Activated CD4-positive, alpha-beta memory T cell treated with anti-CD3 and anti-CD28 coated beads for 36 hours (primary cell): ENCODE measurements at regions of chrX and their contacts with region 1.

Region 1: DNA sequence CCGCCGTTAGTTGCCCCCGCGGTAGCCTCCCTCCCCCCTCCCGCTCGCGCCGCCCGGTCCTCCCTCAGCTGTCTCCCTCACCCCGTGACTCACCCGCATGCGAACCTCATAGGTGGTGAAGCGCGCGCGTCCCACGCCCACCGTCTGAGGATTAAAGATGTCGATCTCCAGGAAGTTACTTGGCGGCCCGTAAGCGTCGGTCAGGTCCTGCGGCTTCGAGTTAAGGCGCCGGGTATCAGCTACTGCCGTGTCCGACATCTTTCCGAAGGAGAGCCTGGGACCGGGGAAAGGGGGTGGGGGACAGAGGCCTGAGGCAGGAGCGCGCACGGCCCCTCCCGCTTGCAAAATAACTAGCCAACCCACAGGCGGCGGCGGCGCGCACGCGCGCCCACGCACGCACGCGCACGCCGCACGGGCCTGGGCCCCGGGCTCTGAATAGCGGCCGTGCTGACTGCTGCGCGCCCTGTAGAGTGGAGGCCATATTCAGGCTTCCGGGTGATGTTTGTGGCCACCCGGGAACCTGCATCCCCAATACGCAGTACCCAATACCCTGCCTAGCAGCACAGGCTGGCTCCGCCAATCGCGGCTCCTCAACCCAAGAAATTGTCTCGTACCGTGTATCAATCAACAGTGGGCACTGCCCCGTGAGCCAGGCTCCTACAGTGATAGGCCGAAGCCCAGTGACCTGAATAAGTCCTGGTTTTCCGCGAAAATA is at the start of gene SNX12:
- DNase-seq: peak; percentile 94
- H3K4me3 Mint-ChIP-seq: peak within 1 kb of the TSS; percentile 95
- H3K27ac Mint-ChIP-seq: peak within 1 kb of the TSS; percentile 97
- H3K4me1 Mint-ChIP-seq: peaks cover 18% of the 10 kb centered on the region
- H3K27me3 Mint-ChIP-seq: no peaks in the 10 kb centered on the region
- total RNA-seq, gene SNX12: 42.1 to 42.5 TPM

Region 2: GRCh38 chrX:71053217-71053621 is 15.0 kb before region 1 on chrX:
- CTCF ChIA-PET with region 1: no interaction called
- POLR2A ChIA-PET with region 1: interaction called, 4 read pairs
- intact Hi-C with region 1: loop called (anchors 1 kb)
- DNase-seq: peak; percentile 39
- H3K4me3 Mint-ChIP-seq: peak overlapping the region; percentile 39
- H3K27ac Mint-ChIP-seq: no peak overlapping the region
- H3K4me1 Mint-ChIP-seq: peaks cover 13% of the 10 kb centered on the region
- H3K27me3 Mint-ChIP-seq: no peaks in the 10 kb centered on the region

Region 3: GRCh38 chrX:71095543-71095911 is 27.3 kb after region 1 on chrX and contains the start of gene FOXO4:
- CTCF ChIA-PET with region 1: interaction called, 3 read pairs
- POLR2A ChIA-PET with region 1: no interaction called
- intact Hi-C with region 1: loop called (anchors 1 kb)
- DNase-seq: peak; percentile 92
- H3K4me3 Mint-ChIP-seq: peak within 1 kb of the TSS; percentile 84
- H3K27ac Mint-ChIP-seq: peak within 1 kb of the TSS; percentile 85
- H3K4me1 Mint-ChIP-seq: peaks cover 23% of the 10 kb centered on the region
- H3K27me3 Mint-ChIP-seq: no peaks in the 10 kb centered on the region
- total RNA-seq, gene FOXO4: 8.7 to 10.7 TPM

Region 4: GRCh38 chrX:71111141-71111843 is 43.1 kb after region 1 on chrX and contains the start of gene IL2RG:
- CTCF ChIA-PET with region 1: no interaction called
- POLR2A ChIA-PET with region 1: interaction called, 8 read pairs
- intact Hi-C with region 1: loop called (anchors 2 kb)
- DNase-seq: peak; percentile 85
- H3K4me3 Mint-ChIP-seq: peak within 1 kb of the TSS; percentile 99
- H3K27ac Mint-ChIP-seq: peak within 1 kb of the TSS; percentile 98
- H3K4me1 Mint-ChIP-seq: peaks cover 38% of the 10 kb centered on the region
- H3K27me3 Mint-ChIP-seq: no peaks in the 10 kb centered on the region
- total RNA-seq, gene IL2RG: 289 to 290 TPM

Region 5: DNA sequence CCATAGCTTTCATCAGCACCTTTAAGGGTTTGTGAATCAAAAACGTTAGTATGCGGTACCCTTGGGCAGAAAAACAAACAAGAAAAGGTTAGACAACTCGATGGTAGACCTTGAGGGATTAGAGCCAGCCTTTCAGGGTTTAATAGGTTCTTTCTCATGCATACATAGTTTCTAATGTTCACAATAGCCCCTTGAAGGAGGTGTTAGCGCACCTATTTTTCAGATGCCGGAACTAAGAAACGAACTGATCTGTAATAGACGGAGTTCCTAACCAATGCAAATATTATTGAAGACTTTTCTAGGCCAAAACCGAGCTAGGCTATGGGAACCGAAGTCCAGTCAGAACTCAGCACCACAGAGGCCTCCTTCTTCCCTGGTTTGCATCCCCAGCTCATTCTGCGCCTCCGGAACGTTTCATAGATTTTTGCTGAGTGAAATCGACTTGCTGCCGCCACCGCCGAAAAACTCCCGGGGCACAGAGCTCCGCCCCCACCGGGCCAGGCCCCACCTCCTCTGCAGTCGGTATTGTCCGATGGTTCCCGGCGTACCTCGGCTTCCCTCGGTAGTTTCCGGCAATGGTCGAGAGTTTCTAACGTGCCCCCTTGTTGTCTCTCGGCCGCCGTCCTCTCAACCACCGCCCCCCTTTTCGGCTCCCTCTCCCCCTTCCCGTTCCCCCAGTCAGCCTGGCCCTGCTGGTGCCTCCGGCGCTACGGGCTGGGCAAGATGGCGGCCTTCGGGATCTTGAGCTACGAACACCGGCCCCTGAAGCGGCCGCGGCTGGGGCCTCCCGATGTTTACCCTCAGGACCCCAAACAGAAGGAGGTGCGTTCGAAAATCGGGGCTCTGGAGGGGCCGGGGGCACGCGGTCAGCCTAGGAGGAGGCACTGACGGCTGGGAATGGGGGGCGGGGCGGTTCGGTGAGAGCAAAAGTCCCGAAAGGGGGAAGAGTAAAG is 50.1 kb after region 1 on chrX and contains the start of gene MED12:
- CTCF ChIA-PET with region 1: no interaction called
- POLR2A ChIA-PET with region 1: interaction called, 4 read pairs
- intact Hi-C with region 1: loop called (anchors 1 kb)
- DNase-seq: peak; percentile 90
- H3K4me3 Mint-ChIP-seq: peak within 1 kb of the TSS; percentile 75
- H3K27ac Mint-ChIP-seq: peak within 1 kb of the TSS; percentile 89
- H3K4me1 Mint-ChIP-seq: peaks cover 38% of the 10 kb centered on the region
- H3K27me3 Mint-ChIP-seq: no peaks in the 10 kb centered on the region
- total RNA-seq, gene MED12: 46.9 to 50.1 TPM

Region 6: GRCh38 chrX:71210819-71211218 is 142.6 kb after region 1 on chrX:
- CTCF ChIA-PET with region 1: no interaction called
- POLR2A ChIA-PET with region 1: no interaction called
- intact Hi-C with region 1: no loop called
- DNase-seq: no peak
- H3K4me3 Mint-ChIP-seq: no peak overlapping the region
- H3K27ac Mint-ChIP-seq: no peak overlapping the region
- H3K4me1 Mint-ChIP-seq: no peaks in the 10 kb centered on the region
- H3K27me3 Mint-ChIP-seq: no peaks in the 10 kb centered on the region

Region 7: DNA sequence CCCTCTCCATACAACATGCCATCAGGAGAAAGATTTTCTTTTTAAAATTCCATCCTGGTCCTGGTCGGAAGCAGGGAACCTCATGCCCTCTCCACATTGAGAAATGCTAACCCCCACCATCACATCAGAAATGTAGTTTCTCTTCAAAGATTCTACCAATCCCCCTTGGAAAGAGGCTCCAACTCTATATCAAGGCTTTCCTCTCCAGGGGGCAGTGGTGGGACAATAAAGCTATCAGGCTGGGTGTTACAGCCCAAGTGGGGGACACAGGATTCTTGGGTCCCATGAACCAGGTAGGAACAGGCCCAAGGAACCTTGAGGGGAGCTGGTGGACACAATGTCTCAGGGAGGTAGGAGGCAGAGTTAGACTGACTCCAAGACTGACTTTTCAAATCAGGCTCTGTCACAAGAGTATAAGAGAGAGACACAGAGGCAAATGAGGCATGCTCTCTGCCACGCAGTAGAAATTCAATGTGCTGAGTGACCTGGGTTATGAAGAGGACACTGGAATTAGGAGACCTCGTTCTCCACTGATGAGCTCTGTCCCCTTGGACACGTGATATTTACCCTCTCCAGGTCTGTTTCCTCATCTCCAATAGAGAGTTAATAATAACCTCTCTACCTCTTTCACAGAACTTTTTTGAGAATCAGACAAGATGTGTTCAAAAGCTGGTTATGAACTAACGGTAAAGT is 159.3 kb after region 1 on chrX:
- CTCF ChIA-PET with region 1: no interaction called
- POLR2A ChIA-PET with region 1: no interaction called
- intact Hi-C with region 1: no loop called
- DNase-seq: peak; percentile 9
- H3K4me3 Mint-ChIP-seq: no peak overlapping the region
- H3K27ac Mint-ChIP-seq: no peak overlapping the region
- H3K4me1 Mint-ChIP-seq: no peaks in the 10 kb centered on the region
- H3K27me3 Mint-ChIP-seq: peaks cover 1% of the 10 kb centered on the region

Region 8: DNA sequence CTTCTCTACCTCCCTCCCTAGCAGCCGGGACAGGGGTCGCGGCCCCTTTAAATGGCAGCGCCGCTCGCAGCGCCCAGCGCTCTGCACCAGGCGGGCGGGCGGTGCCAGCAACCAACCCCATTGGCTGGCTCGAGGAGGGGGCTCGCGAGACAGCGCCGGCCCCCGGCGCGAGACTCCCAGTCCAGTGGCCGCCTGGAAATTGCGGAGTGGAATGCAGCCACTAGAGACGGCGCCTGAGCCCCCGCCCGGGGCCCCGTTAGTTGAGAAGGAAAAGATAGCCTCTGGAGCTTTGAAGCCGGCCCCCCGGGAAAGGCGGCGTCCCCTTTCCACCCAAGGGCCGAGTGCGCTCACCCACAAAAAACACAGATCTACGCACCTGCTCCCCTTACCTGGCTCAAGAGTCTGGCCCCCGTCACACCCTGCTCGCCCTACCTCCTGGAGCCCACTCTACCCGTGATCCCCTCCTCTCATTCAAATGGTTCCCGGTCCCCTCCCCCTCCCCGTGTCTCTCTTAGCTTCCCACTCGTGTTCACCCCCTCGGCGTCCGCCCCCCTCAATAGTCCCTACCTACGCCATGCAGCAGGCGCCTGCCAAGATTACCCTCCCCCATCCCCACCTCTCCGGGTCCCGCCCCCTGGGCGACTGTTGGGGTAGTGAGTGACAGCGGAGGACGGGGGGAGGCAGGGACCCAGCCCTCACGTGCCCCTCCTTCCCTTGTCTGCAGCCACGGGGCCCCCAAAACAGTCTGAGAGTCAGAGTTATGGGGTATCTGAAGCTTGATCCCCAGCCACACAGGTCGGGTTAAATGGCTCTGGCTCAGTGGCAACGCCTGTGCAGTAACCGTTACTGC is 186.1 kb after region 1 on chrX and contains the start of gene ZMYM3:
- CTCF ChIA-PET with region 1: no interaction called
- POLR2A ChIA-PET with region 1: no interaction called
- intact Hi-C with region 1: loop called (anchors 1 kb)
- DNase-seq: peak; percentile 84
- H3K4me3 Mint-ChIP-seq: peak within 1 kb of the TSS; percentile 86
- H3K27ac Mint-ChIP-seq: peak within 1 kb of the TSS; percentile 73
- H3K4me1 Mint-ChIP-seq: peaks cover 25% of the 10 kb centered on the region
- H3K27me3 Mint-ChIP-seq: no peaks in the 10 kb centered on the region
- total RNA-seq, gene ZMYM3: 17.2 to 17.5 TPM